ENCODE measurements at regions of chr2 and their contacts with region 1.

Region 1: GRCh38 chr2:181178823-181179412 is 198.5 kb downstream of the UBE2E3 start:
- DNase-seq: peak; percentile 61
- H3K4me3 Mint-ChIP-seq: no peak overlapping the region
- H3K27ac Mint-ChIP-seq: peak overlapping the region; percentile 5
- H3K4me1 Mint-ChIP-seq: peaks cover 48% of the 10 kb centered on the region
- H3K27me3 Mint-ChIP-seq: no peaks in the 10 kb centered on the region

Region 2: GRCh38 chr2:180222644-180223043 is 956.3 kb before region 1 on chr2:
- CTCF ChIA-PET with region 1: no interaction called
- intact Hi-C with region 1: no loop called
- DNase-seq: no peak
- H3K4me3 Mint-ChIP-seq: no peak overlapping the region
- H3K27ac Mint-ChIP-seq: no peak overlapping the region
- H3K4me1 Mint-ChIP-seq: no peaks in the 10 kb centered on the region
- H3K27me3 Mint-ChIP-seq: no peaks in the 10 kb centered on the region

Region 3: DNA sequence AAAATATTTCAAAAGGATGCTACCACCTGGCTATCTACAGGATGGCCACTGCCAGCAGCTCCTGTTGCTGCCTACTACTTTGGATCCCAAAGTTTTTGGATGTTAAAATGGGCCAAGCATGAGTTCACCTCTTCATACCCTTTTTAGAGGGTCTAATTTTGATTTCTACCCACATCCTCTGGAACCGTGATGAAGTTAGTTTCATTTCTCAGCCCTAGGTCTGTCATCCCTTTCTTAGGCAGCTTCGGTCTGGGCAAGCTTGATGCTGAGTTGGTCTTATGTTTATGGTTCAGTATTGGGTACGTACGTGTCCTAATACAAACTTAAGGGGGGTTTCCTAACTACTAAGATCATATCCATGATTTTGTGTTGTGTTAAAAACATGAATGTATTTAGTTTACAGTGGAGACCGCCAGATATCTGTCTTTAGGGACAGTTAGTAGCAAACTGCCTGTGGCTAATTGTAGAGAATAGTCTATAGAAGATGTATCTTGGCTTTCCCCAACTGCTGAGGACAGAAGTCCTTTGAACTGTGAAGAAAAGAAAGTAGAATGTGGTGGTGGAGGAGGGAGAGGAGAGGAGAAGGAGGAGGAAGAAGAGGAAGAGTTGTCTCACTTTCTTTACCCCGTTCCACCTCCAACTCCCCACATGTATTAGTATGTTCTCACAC is 13.6 kb before region 1 on chr2:
- CTCF ChIA-PET with region 1: no interaction called
- intact Hi-C with region 1: no loop called
- DNase-seq: peak; percentile 36
- H3K4me3 Mint-ChIP-seq: peak overlapping the region; percentile 54
- H3K27ac Mint-ChIP-seq: peak overlapping the region; percentile 90
- H3K4me1 Mint-ChIP-seq: peaks cover 53% of the 10 kb centered on the region
- H3K27me3 Mint-ChIP-seq: no peaks in the 10 kb centered on the region

Region 4: GRCh38 chr2:181190711-181191110 is 11.8 kb after region 1 on chr2:
- CTCF ChIA-PET with region 1: interaction called, 13 read pairs
- intact Hi-C with region 1: loop called (anchors 1 kb)
- DNase-seq: no peak
- H3K4me3 Mint-ChIP-seq: no peak overlapping the region
- H3K27ac Mint-ChIP-seq: no peak overlapping the region
- H3K4me1 Mint-ChIP-seq: peaks cover 24% of the 10 kb centered on the region
- H3K27me3 Mint-ChIP-seq: no peaks in the 10 kb centered on the region

Region 5: GRCh38 chr2:181334158-181334826 is 155.4 kb after region 1 on chr2:
- CTCF ChIA-PET with region 1: no interaction called
- intact Hi-C with region 1: no loop called
- DNase-seq: no peak
- H3K4me3 Mint-ChIP-seq: no peak overlapping the region
- H3K27ac Mint-ChIP-seq: peak overlapping the region; percentile 44
- H3K4me1 Mint-ChIP-seq: peaks cover 18% of the 10 kb centered on the region
- H3K27me3 Mint-ChIP-seq: no peaks in the 10 kb centered on the region

Region 6: DNA sequence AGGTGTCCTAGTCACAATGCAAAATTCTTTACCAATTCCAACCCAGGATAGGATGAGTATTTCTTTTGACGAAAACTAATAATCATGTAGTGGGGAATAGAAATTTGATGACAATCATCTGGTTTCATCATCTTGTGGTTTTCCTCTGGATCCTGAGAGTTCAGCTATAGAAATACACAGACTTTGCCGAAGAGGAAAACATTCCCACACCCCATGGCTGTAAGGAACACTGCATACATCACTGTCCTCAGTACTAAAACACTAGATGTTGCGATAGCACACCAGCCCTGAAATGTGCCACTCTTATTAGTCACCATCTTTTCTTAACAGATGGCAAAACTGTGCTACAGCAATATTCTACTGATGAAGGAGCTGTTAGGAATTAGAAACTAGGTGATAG is 448.6 kb after region 1 on chr2:
- CTCF ChIA-PET with region 1: no interaction called
- intact Hi-C with region 1: no loop called
- DNase-seq: no peak
- H3K4me3 Mint-ChIP-seq: no peak overlapping the region
- H3K27ac Mint-ChIP-seq: no peak overlapping the region
- H3K4me1 Mint-ChIP-seq: no peaks in the 10 kb centered on the region
- H3K27me3 Mint-ChIP-seq: no peaks in the 10 kb centered on the region

Measured in activated naive CD4-positive, alpha-beta T cell treated with anti-CD3 and anti-CD28 coated beads for 36 hours (primary cell).